CD4-positive, alpha-beta T cell (primary cell): ENCODE measurements at regions of chr10 and their contacts with region 1.

Region 1: GRCh38 chr10:86755740-86756510 is 494 bp upstream of the BMPR1A start:
- DNase-seq: peak; percentile 67 to 92 (median 85)
- ATAC-seq: peak; percentile 92
- H3K4me3 ChIP-seq: peak overlapping the region; percentile 62
- H3K4me3 Mint-ChIP-seq: peak overlapping the region; percentile 91
- H3K27ac ChIP-seq: no peak overlapping the region
- H3K27ac Mint-ChIP-seq: peak overlapping the region; percentile 56
- H3K4me1 ChIP-seq: peaks cover 13% of the 10 kb centered on the region
- H3K4me1 Mint-ChIP-seq: peaks cover 32% of the 10 kb centered on the region
- H3K27me3 ChIP-seq: peaks cover 0 to 6% of the 10 kb centered on the region in 2 experiments
- H3K27me3 Mint-ChIP-seq: peaks cover 31% of the 10 kb centered on the region
- CTCF ChIP-seq: no peak

Region 2: GRCh38 chr10:86710987-86711512 is 44.9 kb before region 1 on chr10:
- CTCF ChIA-PET with region 1: no interaction called
- POLR2A ChIA-PET with region 1: interaction called, 29 read pairs
- intact Hi-C with region 1: loop called (anchors 1 to 5 kb)
- DNase-seq: peak; percentile 68 to 93 (median 82)
- ATAC-seq: peak; percentile 95
- H3K4me3 ChIP-seq: peak overlapping the region; percentile 67
- H3K4me3 Mint-ChIP-seq: peak overlapping the region; percentile 95
- H3K27ac ChIP-seq: peak overlapping the region; percentile 78 to 81
- H3K27ac Mint-ChIP-seq: peak overlapping the region; percentile 95
- H3K4me1 ChIP-seq: peaks cover 17% of the 10 kb centered on the region
- H3K4me1 Mint-ChIP-seq: peaks cover 20% of the 10 kb centered on the region
- H3K27me3 ChIP-seq: no peaks in the 10 kb centered on the region
- H3K27me3 Mint-ChIP-seq: no peaks in the 10 kb centered on the region
- CTCF ChIP-seq: peak; percentile 77

Region 3: DNA sequence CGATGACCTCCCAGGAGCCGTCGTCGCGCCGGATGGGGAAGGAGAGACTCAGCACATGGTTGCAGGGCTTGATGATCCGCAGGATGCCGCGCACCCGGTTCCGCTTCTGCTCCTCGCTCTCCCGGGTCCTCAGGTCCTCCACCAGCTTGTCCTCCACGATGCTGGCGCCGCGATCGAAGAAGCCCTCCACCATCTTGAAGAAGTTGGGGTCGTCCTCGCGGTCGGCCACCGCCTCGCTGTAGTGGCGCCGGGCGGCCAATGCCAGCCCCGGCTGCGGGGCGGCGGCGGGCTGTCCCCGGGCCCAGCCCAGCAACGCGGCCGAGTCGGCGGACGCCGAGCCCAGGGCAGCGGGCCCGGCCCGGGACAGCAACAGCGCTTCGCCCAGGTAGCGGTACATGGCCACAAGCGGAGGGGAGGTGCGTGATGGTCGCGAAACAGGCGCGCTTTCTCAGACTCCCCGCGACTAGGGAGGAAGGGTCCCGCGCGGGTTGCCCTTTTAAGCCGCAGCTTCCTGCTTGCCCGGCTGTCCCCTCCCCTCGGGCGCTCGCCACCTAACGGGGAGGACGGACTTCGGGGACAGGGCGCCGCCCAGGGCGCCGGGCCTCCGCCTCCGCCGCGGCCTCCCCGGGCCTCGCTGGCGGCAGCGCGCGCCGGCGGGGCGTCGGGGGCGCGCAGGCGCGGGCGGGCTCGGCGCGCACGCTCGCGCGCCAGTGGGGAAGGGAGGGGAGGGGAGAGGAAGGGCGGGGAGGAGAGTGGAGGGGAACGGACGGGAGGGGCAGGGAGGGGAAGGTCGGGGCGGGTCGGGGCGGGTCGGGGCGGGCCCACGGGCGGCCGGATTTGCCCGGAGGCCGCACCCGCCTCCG is 338.7 kb after region 1 on chr10 and contains the starts of genes GLUD1 and SHLD2:
- CTCF ChIA-PET with region 1: no interaction called
- POLR2A ChIA-PET with region 1: no interaction called
- intact Hi-C with region 1: loop called in 1 of 2 experiments (anchors 2 kb)
- DNase-seq: peak; percentile 75 to 95 (median 84)
- ATAC-seq: peak; percentile 57
- H3K4me3 ChIP-seq: peak within 1 kb of the TSS; percentile 78
- H3K4me3 Mint-ChIP-seq: peak within 1 kb of the TSS; percentile 96
- H3K27ac ChIP-seq: peak within 1 kb of the TSS; percentile 69 to 93
- H3K27ac Mint-ChIP-seq: peak within 1 kb of the TSS; percentile 94
- H3K4me1 ChIP-seq: peaks cover 24% of the 10 kb centered on the region
- H3K4me1 Mint-ChIP-seq: peaks cover 61% of the 10 kb centered on the region
- H3K27me3 ChIP-seq: no peaks in the 10 kb centered on the region
- H3K27me3 Mint-ChIP-seq: no peaks in the 10 kb centered on the region
- CTCF ChIP-seq: no peak
- total RNA-seq, gene GLUD1: 81.0 to 82.4 TPM
- total RNA-seq, gene SHLD2: 20.6 to 23.0 TPM